Naive thymus-derived CD4-positive, alpha-beta T cell (primary cell): ENCODE measurements at regions of chr1 and their contacts with region 1.

Region 1: DNA sequence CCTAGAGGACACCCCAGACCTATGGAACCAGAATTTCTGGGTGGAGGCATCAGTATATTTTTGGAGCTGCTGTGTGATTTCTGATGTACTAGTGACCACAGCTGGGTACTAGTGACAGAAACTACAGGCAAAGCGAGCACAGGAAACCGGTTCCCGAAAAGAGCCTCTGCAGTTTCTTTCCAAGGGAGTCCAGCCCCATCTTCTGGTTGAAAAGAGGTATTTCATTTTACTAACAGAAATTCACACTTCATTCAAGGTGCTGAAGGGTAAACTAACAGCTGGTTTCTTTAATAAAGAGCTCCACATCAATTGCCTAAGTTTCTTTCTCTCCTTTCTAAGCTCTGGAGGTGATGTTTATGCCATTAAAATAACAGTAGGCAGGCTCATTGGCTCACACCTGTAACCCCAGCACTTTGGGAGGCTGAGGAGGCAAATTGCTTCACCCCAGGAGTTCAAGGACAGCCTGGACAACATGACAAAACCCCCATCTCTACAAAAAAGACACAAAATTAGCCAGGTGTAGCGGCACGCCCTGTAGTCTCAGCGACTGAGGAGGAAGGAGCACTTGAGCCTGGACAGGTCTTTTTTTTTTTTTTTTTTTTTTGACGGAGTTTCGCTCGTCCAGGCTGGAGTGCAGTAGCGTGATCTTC is 22.0 kb downstream of the THAP3 start:
- DNase-seq: peak in 7 of 9 donors; percentile 33 to 64 (median 54)
- ATAC-seq: peak; percentile 70
- H3K4me3 ChIP-seq: no peak overlapping the region
- H3K4me3 Mint-ChIP-seq: no peak overlapping the region
- H3K27ac ChIP-seq: no peak overlapping the region
- H3K27ac Mint-ChIP-seq: no peak overlapping the region
- H3K4me1 ChIP-seq: no peaks in the 10 kb centered on the region
- H3K4me1 Mint-ChIP-seq: peaks cover 0 to 6% (median 0%) of the 10 kb centered on the region in 7 donors
- H3K27me3 ChIP-seq: no peaks in the 10 kb centered on the region
- H3K27me3 Mint-ChIP-seq: no peaks in the 10 kb centered on the region

Region 2: DNA sequence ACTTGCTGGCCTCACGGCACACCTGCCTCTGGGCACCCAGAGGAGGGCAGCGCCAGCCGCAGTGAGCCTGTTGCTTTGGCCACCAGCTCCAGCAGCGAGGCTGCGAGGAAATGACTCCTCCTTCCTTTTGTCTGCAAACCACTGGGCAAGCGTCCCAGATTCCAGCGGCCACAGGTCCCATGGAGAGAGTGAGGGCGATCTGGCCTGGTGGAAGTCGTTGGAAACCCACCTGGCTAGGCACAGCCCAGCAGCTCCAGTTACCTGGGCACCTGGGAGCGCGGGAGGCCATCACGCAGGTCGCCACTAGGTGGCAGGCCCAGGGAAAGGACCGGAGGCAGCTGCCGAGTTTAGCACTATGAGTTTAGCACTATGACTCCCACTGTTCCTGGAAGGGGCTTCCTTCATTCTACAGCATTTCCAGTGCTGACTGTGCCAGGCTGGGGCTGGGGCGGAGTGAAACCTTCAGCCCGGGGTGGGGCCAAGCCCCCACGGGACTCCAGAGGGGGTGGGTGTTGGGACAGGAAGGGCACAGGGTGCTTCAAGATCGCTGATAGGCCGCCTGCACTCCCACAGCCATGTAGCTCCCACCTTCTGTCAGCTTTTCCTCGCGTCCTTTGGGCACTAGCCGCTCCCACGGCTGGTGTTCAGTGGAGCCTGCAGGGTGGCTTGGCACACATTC is 223.2 kb before region 1 on chr1:
- CTCF ChIA-PET with region 1: interaction called, 3 read pairs
- POLR2A ChIA-PET with region 1: no interaction called
- intact Hi-C with region 1: loop called in 1 of 2 experiments (anchors 1 kb)
- DNase-seq: peak; percentile 45 to 75 (median 66)
- ATAC-seq: peak; percentile 84
- H3K4me3 ChIP-seq: peak overlapping the region; percentile 15
- H3K4me3 Mint-ChIP-seq: peak overlapping the region; percentile 54 to 83 (median 72)
- H3K27ac ChIP-seq: no peak overlapping the region
- H3K27ac Mint-ChIP-seq: no peak overlapping the region
- H3K4me1 ChIP-seq: peaks cover 13 to 31% of the 10 kb centered on the region in 2 donors
- H3K4me1 Mint-ChIP-seq: peaks cover 0 to 14% (median 11%) of the 10 kb centered on the region in 7 donors
- H3K27me3 ChIP-seq: peaks cover 0 to 8% of the 10 kb centered on the region in 2 donors
- H3K27me3 Mint-ChIP-seq: peaks cover 18 to 60% (median 26%) of the 10 kb centered on the region in 5 donors

Region 3: GRCh38 chr1:6547301-6547700 is 99.3 kb before region 1 on chr1:
- CTCF ChIA-PET with region 1: interaction called, 13 read pairs
- POLR2A ChIA-PET with region 1: interaction called, 3 read pairs
- intact Hi-C with region 1: loop called in 1 of 2 experiments (anchors 2 kb)
- DNase-seq: no peak
- ATAC-seq: no peak
- H3K4me3 ChIP-seq: no peak overlapping the region
- H3K4me3 Mint-ChIP-seq: peak overlapping the region in 4 of 10 donors; percentile 62 to 76 (median 68)
- H3K27ac ChIP-seq: peak overlapping the region; percentile 68
- H3K27ac Mint-ChIP-seq: peak overlapping the region; percentile 73 to 99 (median 91)
- H3K4me1 ChIP-seq: peaks cover 4 to 28% of the 10 kb centered on the region in 2 donors
- H3K4me1 Mint-ChIP-seq: peaks cover 25 to 44% (median 33%) of the 10 kb centered on the region in 7 donors
- H3K27me3 ChIP-seq: no peaks in the 10 kb centered on the region
- H3K27me3 Mint-ChIP-seq: no peaks in the 10 kb centered on the region

Region 4: GRCh38 chr1:7076572-7076971 is 429.9 kb after region 1 on chr1:
- CTCF ChIA-PET with region 1: no interaction called
- POLR2A ChIA-PET with region 1: no interaction called
- intact Hi-C with region 1: no loop called
- DNase-seq: no peak
- ATAC-seq: no peak
- H3K4me3 ChIP-seq: no peak overlapping the region
- H3K4me3 Mint-ChIP-seq: no peak overlapping the region
- H3K27ac ChIP-seq: no peak overlapping the region
- H3K27ac Mint-ChIP-seq: no peak overlapping the region
- H3K4me1 ChIP-seq: no peaks in the 10 kb centered on the region
- H3K4me1 Mint-ChIP-seq: no peaks in the 10 kb centered on the region
- H3K27me3 ChIP-seq: no peaks in the 10 kb centered on the region
- H3K27me3 Mint-ChIP-seq: peaks cover 0 to 49% (median 18%) of the 10 kb centered on the region in 5 donors